Motor neuron (in vitro differentiated cells): ENCODE measurements at regions of chr6 and their contacts with region 1.

Region 1: GRCh38 chr6:20534295-20535262 is at the start of gene CDKAL1:
- ATAC-seq: peak; percentile 90 to 95 (median 93)
- H3K4me3 ChIP-seq: peak within 1 kb of the TSS; percentile 82 to 97 (median 88)
- H3K27ac ChIP-seq: peak within 1 kb of the TSS; percentile 91 to 94
- H3K4me1 ChIP-seq: peaks cover 5 to 8% of the 10 kb centered on the region in 2 donors
- total RNA-seq, gene CDKAL1: 16.1 to 25.2 (median 20.2) TPM

Region 2: DNA sequence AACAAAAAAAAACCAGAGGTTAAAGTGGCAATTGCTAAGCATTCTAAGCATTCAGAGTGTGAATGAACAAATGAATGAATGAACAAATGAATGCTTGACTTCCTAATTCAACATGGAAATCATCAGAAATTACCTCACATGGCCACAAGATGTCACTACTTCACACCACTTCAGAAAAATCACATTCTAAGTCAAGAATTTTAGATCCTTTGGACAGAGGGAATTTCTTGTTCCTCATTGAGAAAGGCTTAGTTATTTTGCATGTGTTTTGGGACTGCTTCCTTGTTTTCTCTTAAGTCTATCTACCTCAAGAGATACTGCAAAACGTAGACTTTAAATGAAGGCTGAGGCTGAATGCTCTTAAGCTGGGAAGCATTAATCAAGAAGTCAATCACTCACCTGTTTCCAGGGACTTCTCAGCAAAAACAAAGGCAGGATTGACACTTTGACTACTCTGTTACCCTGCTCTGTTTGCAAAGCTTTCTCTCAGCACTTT is 442.5 kb before region 1 on chr6:
- in situ Hi-C with region 1: loop called in 1 of 9 experiments (anchors 25 kb)
- ATAC-seq: peak in 3 of 8 experiments; percentile 17 to 51 (median 26)
- H3K4me3 ChIP-seq: no peak overlapping the region
- H3K27ac ChIP-seq: no peak overlapping the region
- H3K4me1 ChIP-seq: peaks cover 0 to 3% of the 10 kb centered on the region in 2 donors

Region 3: GRCh38 chr6:20291764-20292580 is 242.6 kb before region 1 on chr6:
- in situ Hi-C with region 1: loop called in 6 of 9 experiments (anchors 5 to 25 kb)
- ATAC-seq: peak; percentile 72 to 99 (median 90)
- H3K4me3 ChIP-seq: no peak overlapping the region
- H3K27ac ChIP-seq: no peak overlapping the region
- H3K4me1 ChIP-seq: peaks cover 0 to 3% of the 10 kb centered on the region in 2 donors

Region 4: DNA sequence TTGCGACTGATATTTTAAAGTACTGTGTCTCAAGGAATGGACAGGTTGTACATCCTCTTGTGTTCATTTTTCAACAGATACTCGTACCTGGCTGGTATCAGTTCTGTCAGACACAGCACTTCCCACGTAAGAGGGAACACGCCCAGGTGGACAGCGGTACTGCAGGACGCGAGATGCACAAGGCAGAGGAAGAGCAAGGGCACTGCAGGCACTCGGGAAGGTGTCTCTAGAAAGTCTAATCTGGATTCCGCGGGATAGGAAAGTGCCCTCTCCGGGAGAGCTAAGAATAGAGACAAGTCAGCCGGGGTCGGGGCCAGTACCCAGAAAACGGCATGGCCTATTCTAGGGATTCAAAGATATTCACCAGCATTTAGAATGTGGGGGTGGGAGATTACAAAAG is 228.1 kb before region 1 on chr6:
- in situ Hi-C with region 1: no loop called
- ATAC-seq: no peak
- H3K4me3 ChIP-seq: no peak overlapping the region
- H3K27ac ChIP-seq: no peak overlapping the region
- H3K4me1 ChIP-seq: no peaks in the 10 kb centered on the region

Region 5: DNA sequence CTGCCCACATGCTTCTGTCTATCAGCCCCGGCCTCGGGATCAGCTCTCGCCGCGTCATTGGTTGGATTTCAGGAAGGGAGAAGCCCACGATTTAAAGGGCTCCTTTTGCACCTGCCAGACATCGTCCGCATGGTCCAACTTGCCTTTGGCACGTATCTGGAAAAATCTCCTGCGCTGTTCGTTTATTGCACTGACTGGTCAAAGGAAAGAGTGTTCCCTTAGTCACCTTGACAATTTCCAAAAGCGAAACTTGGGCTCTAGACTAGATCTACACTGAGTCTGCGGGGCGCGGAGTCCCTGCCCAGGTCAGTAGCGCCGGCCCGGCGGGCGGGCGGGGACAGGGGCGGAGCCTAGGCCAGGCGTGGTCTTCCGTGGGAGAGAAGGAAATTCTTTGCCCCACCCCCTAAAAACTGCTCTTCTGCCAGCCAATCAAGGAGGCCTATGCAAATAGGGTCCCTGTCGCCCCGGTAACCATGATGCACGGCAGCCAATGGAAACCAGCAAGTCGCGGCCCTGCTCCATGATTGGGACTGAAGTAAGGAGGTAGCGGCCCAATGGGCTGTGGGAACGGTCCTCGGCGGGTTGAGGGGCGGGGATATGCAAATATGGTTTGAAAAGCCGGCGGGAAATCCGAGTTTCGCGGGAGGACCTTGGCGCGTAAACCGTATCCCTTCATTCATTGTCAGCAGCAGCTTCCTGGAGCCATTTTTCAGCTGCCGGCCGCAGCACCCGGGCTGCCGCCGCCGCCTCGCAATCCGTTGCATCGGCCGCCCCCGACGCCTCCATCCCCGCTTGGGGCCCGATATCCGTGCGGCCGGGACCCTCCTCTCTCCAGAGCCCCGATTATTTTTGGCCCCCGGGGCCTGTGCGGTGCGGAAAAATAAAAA is 133.1 kb before region 1 on chr6 and contains the start of gene E2F3:
- in situ Hi-C with region 1: loop called in 1 of 9 experiments (anchors 10 kb)
- ATAC-seq: peak; percentile 81 to 93 (median 90)
- H3K4me3 ChIP-seq: peak within 1 kb of the TSS; percentile 65 to 98 (median 80)
- H3K27ac ChIP-seq: peak within 1 kb of the TSS; percentile 74 to 79
- H3K4me1 ChIP-seq: no peaks in the 10 kb centered on the region
- total RNA-seq, gene E2F3: 6.1 to 24.3 (median 8.3) TPM

Region 6: DNA sequence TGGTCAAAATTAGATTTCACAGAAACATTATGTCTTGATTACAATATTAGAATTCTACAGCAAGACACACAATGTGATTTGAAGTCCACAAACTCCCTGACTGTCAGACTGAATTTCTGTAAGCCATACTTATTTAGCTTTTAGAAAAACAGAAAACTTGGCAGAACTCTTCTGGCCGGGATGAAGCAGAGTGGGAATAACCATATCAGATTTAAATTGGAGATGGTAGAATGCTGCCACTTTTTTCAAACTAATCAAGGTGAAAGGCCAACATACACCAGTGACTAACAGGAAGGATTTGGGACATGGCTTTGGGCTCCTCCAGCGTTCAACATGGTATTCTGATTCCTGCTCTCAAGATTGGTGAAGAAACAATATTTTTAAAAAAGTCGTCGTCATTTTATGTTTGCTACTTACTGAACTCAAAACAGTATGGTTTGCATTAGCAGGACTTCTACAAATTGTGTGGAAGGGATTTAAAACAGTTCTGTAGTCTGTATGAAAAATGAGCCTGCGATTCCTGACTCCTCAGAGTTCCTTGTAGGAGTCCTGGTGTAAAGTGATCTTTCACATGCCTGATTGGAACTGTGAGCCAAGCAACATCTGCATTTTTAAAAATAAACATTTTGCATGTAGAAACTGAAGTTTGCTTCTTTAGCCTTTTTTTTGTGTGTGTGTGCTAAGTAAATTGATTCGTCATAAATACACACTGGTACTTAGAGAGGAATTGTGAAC is 761.1 kb after region 1 on chr6:
- in situ Hi-C with region 1: no loop called
- ATAC-seq: peak in 2 of 8 experiments; percentile 67 to 84
- H3K4me3 ChIP-seq: no peak overlapping the region
- H3K27ac ChIP-seq: no peak overlapping the region
- H3K4me1 ChIP-seq: no peaks in the 10 kb centered on the region